Activated CD8-positive, alpha-beta memory T cell treated with anti-CD3 and anti-CD28 coated beads, Interleukin-2, amount 10 ng/mL, durations not matched to agents 7 days and 5 days (primary cell): ENCODE measurements at regions of chr1 and their contacts with region 1.

Region 1: GRCh38 chr1:20696397-20697329 is 21.1 kb downstream of the KIF17 start:
- DNase-seq: peak; percentile 83
- ATAC-seq: peak; percentile 96
- H3K4me3 Mint-ChIP-seq: peak overlapping the region; percentile 79
- H3K27ac Mint-ChIP-seq: peak overlapping the region; percentile 62
- H3K4me1 Mint-ChIP-seq: peaks cover 6% of the 10 kb centered on the region
- H3K27me3 Mint-ChIP-seq: peaks cover 13% of the 10 kb centered on the region

Region 2: DNA sequence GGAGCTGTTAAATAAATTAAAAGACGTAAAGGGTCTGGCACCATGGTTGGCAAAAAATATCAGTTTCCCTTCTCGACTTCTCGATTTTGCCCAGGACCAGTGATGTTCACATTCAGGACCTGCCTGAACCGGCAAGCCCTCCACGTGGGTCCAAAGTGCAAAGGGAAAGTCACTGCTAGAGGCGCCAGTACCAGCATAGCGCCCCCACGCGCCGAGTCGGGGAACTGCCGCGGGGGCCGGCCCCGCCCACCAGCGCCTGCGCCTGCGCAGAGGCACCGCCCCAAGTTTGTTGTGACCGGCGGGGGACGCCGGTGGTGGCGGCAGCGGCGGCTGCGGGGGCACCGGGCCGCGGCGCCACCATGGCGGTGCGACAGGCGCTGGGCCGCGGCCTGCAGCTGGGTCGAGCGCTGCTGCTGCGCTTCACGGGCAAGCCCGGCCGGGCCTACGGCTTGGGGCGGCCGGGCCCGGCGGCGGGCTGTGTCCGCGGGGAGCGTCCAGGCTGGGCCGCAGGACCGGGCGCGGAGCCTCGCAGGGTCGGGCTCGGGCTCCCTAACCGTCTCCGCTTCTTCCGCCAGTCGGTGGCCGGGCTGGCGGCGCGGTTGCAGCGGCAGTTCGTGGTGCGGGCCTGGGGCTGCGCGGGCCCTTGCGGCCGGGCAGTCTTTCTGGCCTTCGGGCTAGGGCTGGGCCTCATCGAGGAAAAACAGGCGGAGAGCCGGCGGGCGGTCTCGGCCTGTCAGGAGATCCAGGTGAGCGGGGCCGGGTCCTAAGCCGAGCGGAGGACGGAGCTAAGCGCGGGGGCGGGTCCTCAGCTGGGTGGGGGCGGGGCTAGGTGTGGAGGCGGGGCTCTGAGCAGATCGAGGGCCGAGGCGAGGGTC is 63.2 kb before region 1 on chr1 and contains the start of gene PINK1:
- CTCF ChIA-PET with region 1: interaction called, 10 read pairs
- DNase-seq: peak; percentile 85
- ATAC-seq: peak; percentile 92
- H3K4me3 Mint-ChIP-seq: peak within 1 kb of the TSS; percentile 78
- H3K27ac Mint-ChIP-seq: peak within 1 kb of the TSS; percentile 72
- H3K4me1 Mint-ChIP-seq: peaks cover 7% of the 10 kb centered on the region
- H3K27me3 Mint-ChIP-seq: peaks cover 10% of the 10 kb centered on the region
- total RNA-seq, gene PINK1: 3.7 to 5.3 TPM

Region 3: GRCh38 chr1:20661207-20662109 is 35.2 kb before region 1 on chr1 and contains the start of gene DDOST:
- CTCF ChIA-PET with region 1: interaction called, 11 read pairs
- DNase-seq: peak; percentile 98
- ATAC-seq: peak; percentile 98
- H3K4me3 Mint-ChIP-seq: peak within 1 kb of the TSS; percentile 83
- H3K27ac Mint-ChIP-seq: peak within 1 kb of the TSS; percentile 99
- H3K4me1 Mint-ChIP-seq: peaks cover 37% of the 10 kb centered on the region
- H3K27me3 Mint-ChIP-seq: no peaks in the 10 kb centered on the region
- total RNA-seq, gene DDOST: 137 to 170 TPM

Region 4: DNA sequence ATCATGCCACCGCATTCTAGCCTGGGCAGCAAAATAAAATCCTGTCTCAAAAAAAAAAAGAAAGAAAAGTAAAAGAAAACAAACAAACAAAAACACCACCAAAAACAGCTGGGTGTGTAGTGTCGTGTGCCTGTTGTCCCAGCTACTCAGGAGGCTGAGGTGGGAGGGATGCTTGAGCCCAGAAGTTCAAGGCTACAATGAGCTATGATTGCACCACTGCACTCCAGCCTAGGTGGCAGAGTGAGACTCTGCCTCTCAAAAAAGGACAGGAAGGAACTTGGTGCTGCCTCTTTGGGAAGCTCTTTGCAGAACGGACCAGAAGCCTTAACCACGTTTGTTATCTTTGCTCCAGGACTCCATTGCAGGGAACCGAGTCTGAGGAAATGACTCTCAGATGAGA is 10.2 kb after region 1 on chr1:
- CTCF ChIA-PET with region 1: interaction called, 18 read pairs
- DNase-seq: no peak
- ATAC-seq: no peak
- H3K4me3 Mint-ChIP-seq: no peak overlapping the region
- H3K27ac Mint-ChIP-seq: no peak overlapping the region
- H3K4me1 Mint-ChIP-seq: no peaks in the 10 kb centered on the region
- H3K27me3 Mint-ChIP-seq: no peaks in the 10 kb centered on the region

Region 5: DNA sequence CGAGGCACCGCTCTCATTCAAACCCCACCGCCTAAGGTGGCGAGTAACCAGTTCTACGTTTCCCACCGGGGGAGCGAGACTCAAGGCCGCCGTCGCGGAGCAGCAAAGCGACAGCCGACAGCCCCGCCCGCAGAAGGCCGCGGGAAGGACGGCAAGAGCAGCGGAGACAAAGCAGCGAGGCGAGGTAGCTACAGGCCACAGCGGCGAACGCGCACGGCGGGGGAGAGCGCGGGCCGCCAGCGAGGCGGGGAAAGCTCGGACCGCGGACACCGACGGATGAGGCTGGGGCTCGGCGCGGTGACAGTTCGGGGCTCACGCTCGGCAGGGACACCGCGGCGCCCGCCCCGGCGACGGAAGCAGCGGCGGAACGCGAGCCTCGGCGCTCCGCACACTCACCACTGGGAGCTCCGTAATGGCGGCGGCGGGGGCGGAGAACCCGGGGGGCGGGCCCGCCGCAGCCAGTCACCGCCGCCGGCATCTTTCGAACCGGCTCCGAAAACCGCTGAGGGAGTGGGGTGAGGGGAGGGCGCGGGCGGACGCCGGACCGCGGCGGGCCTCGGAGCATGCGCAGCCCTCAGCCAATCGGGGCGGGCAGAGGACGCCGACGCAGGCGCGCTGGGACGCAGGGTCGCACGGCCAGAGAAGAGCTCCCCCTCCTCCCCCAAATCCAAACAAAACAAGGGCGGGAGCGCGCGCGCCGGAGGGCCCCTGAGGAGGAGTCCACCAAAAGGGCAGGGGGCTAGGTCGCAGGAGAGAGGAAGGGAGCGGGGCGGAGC is 89.8 kb after region 1 on chr1:
- CTCF ChIA-PET with region 1: interaction called, 10 read pairs
- DNase-seq: peak; percentile 95
- ATAC-seq: peak; percentile 85
- H3K4me3 Mint-ChIP-seq: peak overlapping the region; percentile 99
- H3K27ac Mint-ChIP-seq: peak overlapping the region; percentile 99
- H3K4me1 Mint-ChIP-seq: peaks cover 28% of the 10 kb centered on the region
- H3K27me3 Mint-ChIP-seq: no peaks in the 10 kb centered on the region

Region 6: GRCh38 chr1:21200767-21201166 is 504.1 kb after region 1 on chr1:
- CTCF ChIA-PET with region 1: interaction called, 52 read pairs
- DNase-seq: no peak
- ATAC-seq: no peak
- H3K4me3 Mint-ChIP-seq: no peak overlapping the region
- H3K27ac Mint-ChIP-seq: no peak overlapping the region
- H3K4me1 Mint-ChIP-seq: no peaks in the 10 kb centered on the region
- H3K27me3 Mint-ChIP-seq: peaks cover 3% of the 10 kb centered on the region